ENCODE measurements at regions of chr3 and their contacts with region 1.

Region 1: GRCh38 chr3:44913868-44914468 is 39.6 kb downstream of the TGM4 start:
- DNase-seq: no peak
- H3K4me3 ChIP-seq: no peak overlapping the region
- H3K27me3 ChIP-seq: peaks cover 2% of the 10 kb centered on the region; the same call in 1 of the 2 replicates
- CTCF ChIP-seq: peak; percentile 86

Region 2: GRCh38 chr3:44529927-44530326 is 384.0 kb before region 1 on chr3:
- CTCF ChIA-PET with region 1: interaction called, 27 read pairs
- POLR2A ChIA-PET with region 1: no interaction called
- DNase-seq: no peak
- H3K4me3 ChIP-seq: no peak overlapping the region
- H3K27me3 ChIP-seq: peaks cover 4% of the 10 kb centered on the region
- CTCF ChIP-seq: peak; percentile 24

Region 3: GRCh38 chr3:44861412-44862220 is 52.4 kb before region 1 on chr3 and contains the start of gene TMEM42:
- CTCF ChIA-PET with region 1: interaction called, 10 read pairs
- POLR2A ChIA-PET with region 1: interaction called, 16 read pairs
- DNase-seq: peak; percentile 44
- H3K4me3 ChIP-seq: peak within 1 kb of the TSS; percentile 71
- H3K27me3 ChIP-seq: no peaks in the 10 kb centered on the region
- CTCF ChIP-seq: peak; percentile 51
- polyA plus RNA-seq, gene TMEM42: 32.7 and 38.0 TPM in 2 replicates

Region 4: DNA sequence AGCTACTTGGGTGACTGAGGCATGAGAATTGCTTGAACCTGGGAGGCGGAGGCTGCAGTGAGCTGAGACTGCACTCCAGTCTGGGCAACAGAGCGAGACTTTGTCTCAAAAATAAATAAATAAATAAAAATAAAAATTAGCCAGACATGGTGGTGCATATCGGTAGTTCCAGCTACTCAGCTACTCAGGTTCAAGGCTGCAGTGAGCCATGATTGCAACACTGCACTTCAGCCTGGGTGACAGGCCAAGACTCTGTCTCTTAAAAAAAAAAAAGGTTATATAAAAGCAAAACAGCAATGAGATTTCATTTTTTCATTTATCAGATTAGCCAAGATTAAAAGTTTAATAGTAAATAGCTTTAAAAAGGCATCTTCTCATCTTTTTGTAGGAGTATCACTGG is 36.6 kb before region 1 on chr3:
- CTCF ChIA-PET with region 1: interaction called, 10 read pairs
- POLR2A ChIA-PET with region 1: no interaction called
- DNase-seq: no peak
- H3K4me3 ChIP-seq: no peak overlapping the region
- H3K27me3 ChIP-seq: no peaks in the 10 kb centered on the region
- CTCF ChIP-seq: no peak

Region 5: DNA sequence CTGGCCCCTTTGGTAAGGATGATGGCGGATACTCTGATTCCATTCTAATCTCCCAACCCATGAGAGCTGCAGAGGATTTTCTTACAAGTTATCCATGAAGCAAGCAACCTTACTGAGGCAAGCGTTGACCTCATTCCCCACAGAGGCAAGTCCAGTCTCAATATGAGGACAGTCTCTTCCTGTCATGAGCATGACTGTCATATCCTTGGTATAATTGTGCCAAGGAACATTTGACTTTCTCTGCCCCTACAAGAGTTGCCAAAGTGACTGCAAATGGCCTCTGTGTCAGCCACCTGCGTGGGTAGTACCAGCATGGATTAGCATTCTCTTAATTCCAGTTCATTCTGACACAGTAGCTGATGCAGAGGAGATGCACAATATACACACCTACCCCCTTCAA is 383.4 kb after region 1 on chr3:
- CTCF ChIA-PET with region 1: no interaction called
- POLR2A ChIA-PET with region 1: no interaction called
- DNase-seq: no peak
- H3K4me3 ChIP-seq: no peak overlapping the region
- H3K27me3 ChIP-seq: peaks cover 7% of the 10 kb centered on the region
- CTCF ChIP-seq: no peak